Activated B cell treated with CpG ODN at 0.5 μM for 24 hours (primary cell): ENCODE measurements at regions of chr7 and their contacts with region 1.

Region 1: DNA sequence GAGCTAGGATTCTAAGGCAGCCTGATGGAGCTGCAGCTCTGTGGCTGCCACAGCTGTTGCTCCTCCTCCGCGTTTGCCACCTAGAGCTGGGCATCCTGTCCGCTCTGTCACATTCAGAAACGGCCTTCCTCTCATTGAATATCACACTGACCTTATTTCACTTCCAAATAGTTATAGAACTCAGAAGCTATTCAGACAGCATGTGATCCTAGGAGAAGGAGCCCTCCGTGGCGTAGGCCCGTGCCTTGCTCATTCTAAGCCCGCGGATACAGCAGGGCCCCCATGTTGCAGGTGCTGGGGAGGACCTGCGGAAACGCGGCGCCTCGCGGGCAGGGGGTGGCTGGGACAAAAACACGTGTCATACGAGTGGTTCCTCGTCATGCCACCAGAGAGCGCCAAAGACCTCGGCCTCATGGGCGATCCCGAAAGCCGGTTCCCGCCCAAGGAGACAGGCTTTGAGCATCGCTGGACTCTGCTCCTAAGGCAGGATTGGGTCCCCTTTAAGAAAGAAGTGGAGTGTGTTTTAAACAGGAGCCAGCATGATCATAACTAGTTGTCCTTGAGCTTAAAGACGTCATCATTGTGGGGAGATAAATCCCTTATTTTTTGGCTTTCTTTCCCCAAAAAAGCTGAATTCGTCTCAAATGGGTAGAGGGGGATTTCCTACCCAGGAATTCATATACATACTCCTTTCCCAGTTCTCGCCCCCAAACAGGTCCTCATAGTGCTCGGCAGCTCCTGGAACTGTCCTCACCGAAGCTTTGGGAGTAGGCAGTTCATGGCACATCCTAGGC is 17.9 kb upstream of the FIGNL1 start:
- DNase-seq: peak; percentile 61
- ATAC-seq: peak; percentile 93
- H3K4me3 Mint-ChIP-seq: peak overlapping the region; percentile 45
- H3K27ac Mint-ChIP-seq: no peak overlapping the region
- H3K4me1 Mint-ChIP-seq: peaks cover 8% of the 10 kb centered on the region
- H3K27me3 Mint-ChIP-seq: no peaks in the 10 kb centered on the region
- CTCF ChIP-seq: peak; percentile 43

Region 2: DNA sequence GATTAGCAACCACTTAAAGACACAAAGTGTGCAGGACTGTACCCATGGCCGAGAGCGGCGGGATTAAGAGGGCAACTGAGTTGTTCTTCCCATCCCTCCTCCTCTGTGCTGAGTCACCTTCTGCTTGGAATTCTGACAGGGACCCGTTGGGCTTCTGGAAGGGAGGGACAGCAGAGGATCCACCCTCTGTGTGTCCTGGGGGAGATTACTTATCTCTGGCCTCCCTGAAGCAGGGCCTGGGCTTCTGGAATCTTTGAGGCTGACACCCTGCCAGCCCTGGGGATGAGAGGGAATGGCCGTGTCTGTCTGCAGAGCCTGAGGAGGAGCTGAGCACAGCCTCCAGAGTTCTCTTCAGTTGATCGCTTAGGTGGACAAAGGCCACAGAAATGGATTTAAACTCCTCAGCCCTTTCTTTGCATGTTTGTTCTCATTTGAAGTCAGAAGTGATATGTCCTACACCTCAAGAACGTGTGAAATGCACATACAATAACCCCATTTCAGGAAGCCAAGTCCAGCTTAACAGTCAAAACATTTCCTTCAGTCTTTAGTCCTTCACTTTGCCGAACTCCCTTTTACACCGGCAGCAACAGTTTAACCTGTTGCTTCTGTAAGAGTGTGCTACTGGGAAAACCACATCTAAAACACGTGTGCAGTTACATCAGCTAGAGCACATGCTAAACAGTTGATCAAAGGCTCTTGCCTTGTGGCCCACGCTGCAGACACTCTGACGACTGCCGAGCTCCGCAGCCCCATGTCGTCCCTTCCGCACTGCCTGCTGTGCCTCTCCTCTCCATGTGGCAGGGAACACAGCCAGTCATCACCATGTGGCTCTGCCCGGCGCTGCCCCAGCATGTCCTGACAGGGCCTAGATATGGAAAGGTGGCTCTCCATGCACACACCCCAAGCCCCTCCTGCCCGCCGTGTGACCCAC is 107.8 kb before region 1 on chr7:
- CTCF ChIA-PET with region 1: no interaction called
- POLR2A ChIA-PET with region 1: no interaction called
- intact Hi-C with region 1: no loop called
- DNase-seq: no peak
- ATAC-seq: no peak
- H3K4me3 Mint-ChIP-seq: no peak overlapping the region
- H3K27ac Mint-ChIP-seq: peak overlapping the region; percentile 80
- H3K4me1 Mint-ChIP-seq: peaks cover 93% of the 10 kb centered on the region
- H3K27me3 Mint-ChIP-seq: no peaks in the 10 kb centered on the region
- CTCF ChIP-seq: no peak

Region 3: DNA sequence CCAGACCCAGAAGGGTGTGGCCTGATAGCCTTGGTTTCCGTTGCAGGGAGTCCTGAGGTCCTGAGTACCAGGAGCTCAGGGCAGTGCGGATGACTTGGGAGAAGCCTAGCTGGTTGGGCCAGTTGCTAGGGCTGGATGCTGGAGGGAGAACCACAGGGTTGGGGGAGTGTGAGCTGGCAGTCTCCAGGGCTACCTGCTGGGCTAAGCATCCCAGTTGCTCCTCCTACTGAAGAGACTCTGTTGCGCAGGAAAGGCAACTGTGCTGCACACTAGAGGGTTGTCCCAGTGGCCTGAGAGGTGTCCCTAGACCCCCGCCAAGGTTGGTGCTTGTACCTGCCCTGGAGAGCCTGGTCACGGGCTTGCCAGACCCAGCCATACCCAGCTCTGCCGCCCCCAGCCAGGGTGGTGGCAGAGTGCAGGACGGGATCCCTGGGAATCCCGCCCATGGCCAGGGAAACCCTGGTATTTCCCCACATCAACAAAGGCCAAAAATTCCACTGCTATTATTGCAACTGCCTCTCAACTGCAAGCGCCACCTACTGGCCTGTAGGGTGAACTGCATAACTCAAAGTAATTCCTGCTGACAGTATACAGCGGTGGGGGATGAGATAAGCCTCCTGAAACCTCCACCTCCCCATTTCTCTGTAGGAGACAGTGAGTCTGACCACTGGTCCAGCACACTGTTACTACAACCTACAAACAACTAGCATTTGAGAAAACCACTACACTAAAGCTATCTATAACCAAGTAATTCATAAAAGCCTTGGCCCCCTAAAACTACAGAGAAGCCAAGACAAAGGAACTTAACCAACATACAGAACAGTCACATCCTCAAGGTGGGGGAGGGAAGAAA is 164.8 kb after region 1 on chr7:
- CTCF ChIA-PET with region 1: interaction called, 6 read pairs
- POLR2A ChIA-PET with region 1: no interaction called
- intact Hi-C with region 1: loop called (anchors 1 kb)
- DNase-seq: peak; percentile 32
- ATAC-seq: peak; percentile 79
- H3K4me3 Mint-ChIP-seq: no peak overlapping the region
- H3K27ac Mint-ChIP-seq: no peak overlapping the region
- H3K4me1 Mint-ChIP-seq: peaks cover 14% of the 10 kb centered on the region
- H3K27me3 Mint-ChIP-seq: peaks cover 20% of the 10 kb centered on the region
- CTCF ChIP-seq: no peak

Region 4: DNA sequence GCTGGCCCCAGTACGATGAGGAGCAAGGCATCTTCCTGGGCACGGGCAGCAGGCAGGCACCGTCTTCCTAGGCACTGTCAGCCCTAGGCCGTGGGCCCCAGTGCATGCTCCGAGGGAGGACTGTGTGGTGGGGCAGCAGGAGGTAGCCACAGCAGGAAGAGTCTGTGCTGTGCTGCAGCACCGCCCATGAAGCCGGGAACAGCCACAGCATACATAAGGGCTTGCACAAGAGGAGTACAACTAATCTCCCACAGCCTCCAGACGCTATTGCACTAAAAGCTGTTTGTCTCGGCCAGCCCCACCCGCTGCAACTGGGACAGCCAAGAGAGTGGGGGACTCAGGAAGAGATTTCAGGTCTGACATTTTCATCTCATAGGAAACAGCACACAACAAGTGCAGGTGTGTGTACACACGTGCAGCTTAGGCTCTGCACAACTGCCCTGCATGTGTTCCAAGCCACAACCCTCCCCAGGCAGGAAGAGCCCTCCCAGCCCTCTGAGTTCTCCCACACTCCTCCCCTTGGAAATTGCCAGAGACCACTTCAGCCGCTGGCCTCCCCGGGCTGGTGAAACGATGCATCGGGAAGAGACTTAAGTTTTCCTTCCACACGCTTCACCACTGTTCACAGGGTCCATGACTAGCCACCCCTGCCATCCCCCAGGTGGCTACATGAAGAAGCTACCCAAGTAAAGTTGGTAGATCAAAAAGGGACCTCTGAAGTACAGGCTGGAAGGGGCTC is 185.3 kb after region 1 on chr7:
- CTCF ChIA-PET with region 1: no interaction called
- POLR2A ChIA-PET with region 1: no interaction called
- intact Hi-C with region 1: no loop called
- DNase-seq: no peak
- ATAC-seq: no peak
- H3K4me3 Mint-ChIP-seq: no peak overlapping the region
- H3K27ac Mint-ChIP-seq: no peak overlapping the region
- H3K4me1 Mint-ChIP-seq: peaks cover 9% of the 10 kb centered on the region
- H3K27me3 Mint-ChIP-seq: peaks cover 7% of the 10 kb centered on the region
- CTCF ChIP-seq: no peak

Region 5: GRCh38 chr7:50679218-50680007 is 211.4 kb after region 1 on chr7:
- CTCF ChIA-PET with region 1: interaction called, 18 read pairs
- POLR2A ChIA-PET with region 1: no interaction called
- intact Hi-C with region 1: loop called (anchors 1 kb)
- DNase-seq: no peak
- ATAC-seq: peak; percentile 42
- H3K4me3 Mint-ChIP-seq: no peak overlapping the region
- H3K27ac Mint-ChIP-seq: no peak overlapping the region
- H3K4me1 Mint-ChIP-seq: peaks cover 6% of the 10 kb centered on the region
- H3K27me3 Mint-ChIP-seq: peaks cover 5% of the 10 kb centered on the region
- CTCF ChIP-seq: no peak

Region 6: DNA sequence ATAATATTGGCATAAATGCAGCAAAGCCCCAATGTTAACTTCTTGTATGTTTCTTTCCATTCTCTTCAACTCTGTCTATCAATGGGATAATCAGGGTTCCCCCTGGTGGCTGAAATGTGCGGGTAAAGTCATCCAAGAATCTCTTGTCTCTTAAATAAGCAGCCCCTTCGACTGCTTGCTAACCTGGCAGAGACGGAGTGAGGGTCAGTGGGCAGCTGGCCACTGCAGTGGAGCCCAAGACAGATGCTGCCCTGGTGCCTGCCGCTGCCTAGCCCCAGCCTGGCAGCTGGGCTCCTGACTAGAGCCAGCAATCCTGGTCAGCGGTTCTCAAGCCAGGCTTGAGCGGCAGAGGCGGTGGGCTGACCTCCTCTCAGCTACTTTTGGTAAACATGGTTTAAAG is 599.7 kb after region 1 on chr7:
- CTCF ChIA-PET with region 1: no interaction called
- POLR2A ChIA-PET with region 1: no interaction called
- intact Hi-C with region 1: loop called (anchors 2 kb)
- DNase-seq: no peak
- ATAC-seq: no peak
- H3K4me3 Mint-ChIP-seq: no peak overlapping the region
- H3K27ac Mint-ChIP-seq: no peak overlapping the region
- H3K4me1 Mint-ChIP-seq: no peaks in the 10 kb centered on the region
- H3K27me3 Mint-ChIP-seq: no peaks in the 10 kb centered on the region
- CTCF ChIP-seq: no peak